ENCODE measurements at regions of chr1 and their contacts with region 1.

Region 1: GRCh38 chr1:234499119-234499942 is 20.4 kb upstream of the TARBP1 start:
- DNase-seq: peak; percentile 76 to 85 (median 83)
- H3K4me3 ChIP-seq: peak overlapping the region; percentile 10 to 66 (median 23)
- H3K4me3 Mint-ChIP-seq: peak overlapping the region; percentile 72 to 88
- H3K27ac ChIP-seq: peak overlapping the region; percentile 72 to 86
- H3K27ac Mint-ChIP-seq: peak overlapping the region; percentile 86 to 98 (median 94)
- H3K4me1 ChIP-seq: peaks cover 27 to 31% of the 10 kb centered on the region in 2 donors
- H3K4me1 Mint-ChIP-seq: peaks cover 44% of the 10 kb centered on the region
- H3K27me3 ChIP-seq: no peaks in the 10 kb centered on the region
- H3K27me3 Mint-ChIP-seq: peaks cover 1 to 3% (median 2%) of the 10 kb centered on the region in 3 donors
- CTCF ChIP-seq: peak; percentile 91

Region 2: DNA sequence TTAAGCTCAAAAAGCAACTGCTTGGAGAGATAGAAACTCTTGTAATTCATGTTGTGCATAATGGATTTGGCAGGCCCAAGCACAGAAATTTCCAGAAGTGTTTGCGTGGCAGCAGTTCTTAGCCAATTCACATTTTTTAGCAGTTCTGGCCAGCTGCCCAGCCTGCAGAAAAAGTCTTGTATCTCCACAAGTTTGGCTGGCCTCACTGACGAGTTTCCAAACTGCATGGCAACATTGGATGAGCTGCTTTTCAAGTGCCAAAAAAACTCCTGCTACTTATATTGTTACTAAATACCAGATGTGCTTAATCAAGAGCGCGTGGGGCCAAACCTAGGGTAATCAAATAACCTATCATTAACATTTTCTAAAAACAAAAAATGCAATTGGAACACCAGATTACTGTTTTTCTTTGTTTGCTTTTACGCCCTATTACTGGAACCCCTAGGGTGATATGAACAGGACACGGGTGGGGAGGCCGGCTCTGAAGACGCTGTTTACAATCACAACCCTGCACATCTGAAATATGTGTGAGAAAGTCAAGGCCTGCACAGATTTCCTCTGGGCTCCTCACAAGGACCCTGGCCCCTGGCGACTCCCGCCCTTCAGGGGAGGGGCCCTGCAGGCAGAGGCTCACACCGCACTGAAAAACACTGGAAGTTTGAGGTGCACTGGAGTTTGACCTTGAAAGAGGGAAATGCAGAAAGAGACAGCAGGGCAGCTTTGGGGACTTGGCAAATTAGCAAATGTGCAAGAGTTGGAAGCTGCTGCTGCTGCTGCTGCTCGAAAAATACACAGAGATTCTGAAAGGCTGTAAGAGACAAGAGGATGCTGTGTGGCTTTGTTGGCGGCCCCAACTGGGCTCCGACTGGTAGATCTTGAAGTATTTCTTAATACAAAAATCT is 34.9 kb after region 1 on chr1:
- intact Hi-C with region 1: loop called in 1 of 2 experiments (anchors 5 kb)
- DNase-seq: no peak
- H3K4me3 ChIP-seq: no peak overlapping the region
- H3K4me3 Mint-ChIP-seq: no peak overlapping the region
- H3K27ac ChIP-seq: no peak overlapping the region
- H3K27ac Mint-ChIP-seq: peak overlapping the region in 5 of 7 donors; percentile 21 to 99 (median 54)
- H3K4me1 ChIP-seq: peaks cover 37 to 41% of the 10 kb centered on the region in 2 donors
- H3K4me1 Mint-ChIP-seq: peaks cover 47% of the 10 kb centered on the region
- H3K27me3 ChIP-seq: no peaks in the 10 kb centered on the region
- H3K27me3 Mint-ChIP-seq: peaks cover 2% of the 10 kb centered on the region in 3 donors
- CTCF ChIP-seq: no peak

Region 3: DNA sequence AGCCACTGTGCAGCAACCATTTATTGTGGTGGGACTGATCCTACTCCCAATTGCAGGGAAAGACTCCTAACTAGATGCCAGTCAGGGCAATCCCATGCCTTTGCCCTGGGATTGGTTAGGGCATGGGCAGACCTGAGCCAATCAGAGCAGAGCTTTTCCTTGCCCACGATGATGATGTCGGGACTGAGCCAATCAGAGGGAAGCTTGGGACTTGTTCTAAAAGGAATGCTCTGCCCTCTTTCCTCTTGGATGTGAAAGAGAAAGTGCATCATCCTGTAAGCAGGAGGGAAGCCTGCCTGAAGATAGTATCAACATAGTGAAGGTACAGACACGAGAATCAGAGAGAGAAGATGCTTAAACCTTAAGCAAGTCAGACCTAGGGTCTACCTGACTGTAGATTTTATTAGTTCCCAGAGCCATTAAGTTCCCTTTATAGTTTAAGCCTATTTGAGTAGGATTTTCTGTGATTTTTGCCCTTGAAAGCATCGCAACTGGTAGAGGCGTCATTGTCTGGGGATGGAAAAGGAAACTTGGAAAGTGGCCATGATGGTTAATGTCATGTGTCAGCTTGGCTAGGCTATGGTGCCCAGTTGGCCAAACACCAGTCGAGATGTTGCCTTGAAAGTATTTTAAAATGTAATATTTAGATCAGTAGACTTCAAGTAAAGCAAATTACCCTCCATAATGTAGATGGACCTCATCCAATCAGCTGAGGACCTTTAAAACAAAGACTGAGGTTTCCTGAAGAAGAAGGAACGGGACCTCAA is 90.7 kb after region 1 on chr1:
- intact Hi-C with region 1: loop called in 1 of 2 experiments (anchors 5 kb)
- DNase-seq: no peak
- H3K4me3 ChIP-seq: no peak overlapping the region
- H3K4me3 Mint-ChIP-seq: no peak overlapping the region
- H3K27ac ChIP-seq: no peak overlapping the region
- H3K27ac Mint-ChIP-seq: no peak overlapping the region
- H3K4me1 ChIP-seq: peaks cover 8 to 13% of the 10 kb centered on the region in 2 donors
- H3K4me1 Mint-ChIP-seq: peaks cover 18% of the 10 kb centered on the region
- H3K27me3 ChIP-seq: no peaks in the 10 kb centered on the region
- H3K27me3 Mint-ChIP-seq: peaks cover 0 to 5% (median 1%) of the 10 kb centered on the region in 3 donors
- CTCF ChIP-seq: no peak

Region 4: DNA sequence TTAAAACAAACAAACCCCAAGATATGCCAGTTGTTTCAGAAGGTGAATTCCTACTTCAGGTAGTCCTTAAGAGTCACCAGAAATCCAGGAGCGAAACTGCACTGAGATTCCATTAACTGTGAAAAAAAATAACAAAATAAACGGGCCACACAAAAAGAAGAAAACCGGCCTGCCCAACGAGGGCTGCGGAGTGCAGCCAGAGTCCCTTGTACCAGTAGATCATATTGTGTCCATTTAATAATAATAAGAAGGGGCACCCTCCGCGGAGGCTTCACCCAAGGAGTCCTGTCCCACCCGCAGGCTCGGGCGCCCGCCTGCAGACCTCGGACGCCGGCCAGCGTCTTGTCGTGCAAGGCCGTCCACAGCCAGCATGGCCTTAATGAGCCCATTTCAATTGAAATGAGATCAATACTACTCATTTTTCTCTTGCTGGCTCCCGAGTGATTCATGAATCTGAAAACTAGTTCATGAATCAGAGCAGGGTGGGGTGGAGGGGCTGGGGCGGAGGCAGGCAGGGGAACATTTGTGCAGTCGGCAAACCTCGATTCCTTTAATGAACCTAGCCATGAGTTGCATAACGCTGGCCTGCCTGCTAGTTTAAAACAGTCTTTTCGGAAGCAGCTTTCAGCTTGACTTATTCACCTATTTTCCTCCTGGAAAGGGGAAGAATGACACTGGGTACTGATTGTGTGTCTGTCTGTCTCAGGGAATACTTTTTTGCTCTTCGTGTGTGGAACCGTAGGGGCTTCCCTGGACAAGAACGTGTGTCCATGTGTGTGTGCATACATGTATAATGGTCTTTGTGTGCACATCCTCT is 223.8 kb after region 1 on chr1:
- intact Hi-C with region 1: loop called in 1 of 2 experiments (anchors 10 kb)
- DNase-seq: peak; percentile 87 to 95 (median 94)
- H3K4me3 ChIP-seq: peak overlapping the region in 1 of 3 experiments; percentile 61
- H3K4me3 Mint-ChIP-seq: peak overlapping the region; percentile 65 to 75
- H3K27ac ChIP-seq: peak overlapping the region; percentile 89 to 95
- H3K27ac Mint-ChIP-seq: peak overlapping the region; percentile 93 to 98 (median 97)
- H3K4me1 ChIP-seq: peaks cover 92 to 93% of the 10 kb centered on the region in 2 donors
- H3K4me1 Mint-ChIP-seq: peaks cover 96% of the 10 kb centered on the region
- H3K27me3 ChIP-seq: no peaks in the 10 kb centered on the region
- H3K27me3 Mint-ChIP-seq: peaks cover 0 to 4% (median 2%) of the 10 kb centered on the region in 3 donors
- CTCF ChIP-seq: no peak

Region 5: DNA sequence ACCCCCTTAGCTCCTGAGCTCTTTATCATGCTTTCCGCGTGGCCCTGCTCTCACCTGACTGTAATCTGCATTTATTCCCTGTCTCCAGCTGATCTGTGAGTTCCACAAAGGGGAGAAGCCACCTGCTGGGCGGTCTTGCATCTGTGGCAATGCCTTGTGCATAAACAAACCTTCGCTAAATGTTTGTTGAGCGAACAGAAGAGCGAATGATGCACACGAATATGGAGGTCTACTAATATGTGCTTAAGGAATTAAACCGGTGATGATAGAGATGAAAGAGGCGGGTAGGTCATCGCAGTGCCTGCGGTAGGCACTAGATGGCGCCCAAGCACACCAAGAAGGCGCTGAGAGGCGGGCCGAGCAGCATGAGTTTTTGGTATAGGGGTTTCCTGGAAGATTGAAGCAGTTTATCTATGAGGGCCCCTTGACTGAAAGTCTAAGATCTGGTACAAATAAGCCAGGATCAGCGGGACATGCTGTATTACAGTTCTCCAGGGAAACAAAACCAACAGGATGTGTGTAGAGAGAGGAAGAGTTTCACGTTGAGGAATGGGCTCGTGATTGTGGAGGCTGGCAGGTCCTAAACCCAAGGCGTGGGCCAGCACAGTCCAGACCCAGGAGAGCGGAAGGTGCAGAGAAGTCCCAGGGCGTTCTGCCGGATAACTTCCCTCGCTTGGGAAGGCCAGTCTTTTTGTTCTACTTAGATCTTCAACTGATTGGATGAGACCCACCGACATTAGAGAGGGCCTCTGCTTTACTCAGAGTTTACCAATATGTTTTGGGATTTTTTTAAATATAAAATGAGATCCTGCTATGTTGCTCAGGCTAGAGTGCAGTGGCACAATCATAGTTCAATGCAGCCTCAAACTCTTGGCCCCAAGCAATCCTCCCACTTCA is 594.6 kb after region 1 on chr1:
- intact Hi-C with region 1: loop called (anchors 5 kb)
- DNase-seq: peak; percentile 50 to 71 (median 65)
- H3K4me3 ChIP-seq: no peak overlapping the region
- H3K4me3 Mint-ChIP-seq: peak overlapping the region in 1 of 2 donors; percentile 62
- H3K27ac ChIP-seq: no peak overlapping the region
- H3K27ac Mint-ChIP-seq: no peak overlapping the region
- H3K4me1 ChIP-seq: peaks cover 15 to 16% of the 10 kb centered on the region in 2 donors
- H3K4me1 Mint-ChIP-seq: peaks cover 16% of the 10 kb centered on the region
- H3K27me3 ChIP-seq: peaks cover 0 to 2% of the 10 kb centered on the region in 2 donors
- H3K27me3 Mint-ChIP-seq: peaks cover 3 to 7% (median 5%) of the 10 kb centered on the region in 3 donors
- CTCF ChIP-seq: peak; percentile 97

Measured in CD14-positive monocyte (primary cell).